ENCODE measurements at regions of chr1 and their contacts with region 1.

Region 1: DNA sequence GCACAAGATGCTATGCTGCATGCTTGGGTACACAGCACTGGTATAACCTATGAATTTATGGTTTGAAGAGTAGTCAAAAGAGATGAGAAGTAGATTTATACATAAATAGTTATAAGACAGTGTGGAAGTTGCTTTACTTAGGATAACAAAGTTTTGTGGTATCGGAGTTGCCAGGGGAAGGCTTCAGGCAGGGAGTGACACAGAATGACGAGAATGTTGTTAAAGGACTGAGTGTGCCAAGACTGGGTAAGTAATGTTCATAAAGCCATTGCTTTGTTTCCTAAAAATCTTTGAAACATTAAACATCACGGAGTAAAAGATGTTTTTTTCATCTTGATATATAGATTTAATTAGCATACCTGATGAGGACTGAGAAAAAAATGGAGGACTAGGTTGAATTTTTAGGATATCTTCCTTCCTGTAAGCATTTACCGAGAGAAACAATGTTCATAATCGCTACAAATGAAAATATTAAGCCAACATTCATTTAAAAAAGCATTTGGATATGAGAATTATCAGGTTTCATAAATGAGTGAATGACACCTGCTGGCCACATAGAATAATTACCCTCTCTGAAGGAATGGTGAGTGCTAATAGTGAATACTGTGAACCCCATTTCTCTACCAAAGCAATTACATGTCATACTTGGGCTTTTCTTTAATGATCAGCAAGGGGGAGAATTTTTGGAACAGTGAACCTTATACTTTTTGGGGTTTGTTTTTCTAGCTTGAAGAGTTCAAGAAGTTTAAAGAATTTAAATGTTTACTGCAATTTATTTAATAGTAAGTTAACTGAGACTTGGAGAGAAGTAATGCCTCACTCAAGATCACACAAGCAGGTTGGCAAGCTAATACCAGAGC is 28.4 kb downstream of the EXTL2 start:
- DNase-seq: peak; percentile 47 to 70 (median 67)
- H3K4me3 ChIP-seq: peak overlapping the region in 1 of 7 experiments; percentile 17
- H3K27ac ChIP-seq: no peak overlapping the region
- H3K4me1 ChIP-seq: peaks cover 0 to 9% (median 3%) of the 10 kb centered on the region in 4 experiments
- H3K27me3 ChIP-seq: no peaks in the 10 kb centered on the region

Region 2: GRCh38 chr1:100469578-100469977 is 396.7 kb before region 1 on chr1:
- CTCF ChIA-PET with region 1: interaction called, 52 read pairs
- POLR2A ChIA-PET with region 1: no interaction called
- DNase-seq: no peak
- H3K4me3 ChIP-seq: no peak overlapping the region
- H3K27ac ChIP-seq: no peak overlapping the region
- H3K4me1 ChIP-seq: peaks cover 0 to 8% (median under 1%) of the 10 kb centered on the region in 4 experiments
- H3K27me3 ChIP-seq: no peaks in the 10 kb centered on the region

Region 3: GRCh38 chr1:100532645-100533044 is 333.6 kb before region 1 on chr1:
- CTCF ChIA-PET with region 1: interaction called, 10 read pairs
- POLR2A ChIA-PET with region 1: no interaction called
- DNase-seq: peak in 1 of 3 donors; percentile 30
- H3K4me3 ChIP-seq: peak overlapping the region in 1 of 7 experiments; percentile 29
- H3K27ac ChIP-seq: no peak overlapping the region
- H3K4me1 ChIP-seq: peaks cover 13 to 53% (median 29%) of the 10 kb centered on the region in 4 experiments
- H3K27me3 ChIP-seq: peaks cover 0 to 1% (median 0%) of the 10 kb centered on the region in 5 experiments

Region 4: DNA sequence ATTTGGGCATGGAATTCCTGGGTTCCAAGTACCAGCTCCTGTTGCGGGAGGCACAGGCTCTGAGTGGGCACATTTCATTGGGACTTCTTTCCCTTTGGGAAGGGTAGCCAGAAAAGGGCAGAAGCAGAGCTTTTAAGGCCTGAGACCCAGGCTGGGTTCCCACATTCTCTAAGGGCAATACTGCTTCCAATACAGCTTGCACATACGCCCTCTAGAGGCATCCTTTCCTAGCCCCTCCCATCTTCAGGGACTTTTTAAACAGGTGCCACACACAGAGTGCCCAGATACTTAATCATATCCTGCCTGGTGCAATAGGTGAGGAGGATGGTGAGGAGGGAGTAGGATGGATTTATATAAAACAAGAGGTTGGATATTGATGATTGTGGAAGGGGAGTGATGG is 322.6 kb before region 1 on chr1:
- CTCF ChIA-PET with region 1: interaction called, 13 read pairs
- POLR2A ChIA-PET with region 1: no interaction called
- DNase-seq: peak; percentile 44 to 71 (median 67)
- H3K4me3 ChIP-seq: no peak overlapping the region
- H3K27ac ChIP-seq: no peak overlapping the region
- H3K4me1 ChIP-seq: peaks cover 0 to 15% (median 15%) of the 10 kb centered on the region in 4 experiments
- H3K27me3 ChIP-seq: peaks cover 7 to 27% (median 9%) of the 10 kb centered on the region in 5 experiments

Region 5: DNA sequence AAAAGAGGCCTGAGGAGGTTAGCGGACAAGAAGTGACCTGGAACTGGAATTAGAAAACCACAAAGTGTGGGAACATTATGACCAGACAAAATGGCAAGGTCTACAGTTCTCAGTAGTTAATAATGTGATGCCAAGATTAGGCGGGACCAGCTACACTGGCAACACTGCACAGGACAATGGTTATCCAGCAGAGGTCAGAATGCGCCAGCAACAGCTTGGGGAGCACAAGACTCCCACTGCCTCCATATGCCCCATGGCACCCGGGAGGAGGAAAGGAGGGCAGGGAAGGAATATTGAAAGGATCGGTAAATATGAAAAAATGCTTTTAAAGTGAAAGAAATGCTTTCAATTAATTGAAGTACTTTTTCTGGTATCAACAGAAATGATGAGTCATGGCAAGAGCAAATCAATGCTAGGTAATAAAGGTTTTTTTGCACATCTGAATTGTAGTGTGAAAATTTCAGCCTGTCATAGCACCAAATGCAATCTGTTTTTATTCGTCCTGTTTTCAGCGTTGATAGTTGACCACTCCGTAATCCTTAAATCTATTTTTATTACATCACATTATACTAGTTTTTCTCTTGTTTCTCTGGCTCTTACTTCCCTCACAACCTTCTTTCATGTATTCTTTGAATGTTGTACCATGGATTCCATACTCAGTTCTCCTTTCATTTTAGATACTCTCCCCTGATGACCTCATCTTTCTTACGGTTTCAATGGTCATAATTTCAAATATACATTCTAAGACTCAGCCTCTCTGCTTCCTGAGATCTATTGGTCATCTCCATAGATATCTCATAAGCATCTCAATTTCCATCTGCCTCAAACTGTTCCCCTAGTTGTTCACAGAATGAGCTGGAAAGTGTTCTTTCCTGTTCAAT is 116.0 kb before region 1 on chr1:
- CTCF ChIA-PET with region 1: no interaction called
- POLR2A ChIA-PET with region 1: no interaction called
- DNase-seq: no peak
- H3K4me3 ChIP-seq: no peak overlapping the region
- H3K27ac ChIP-seq: no peak overlapping the region
- H3K4me1 ChIP-seq: no peaks in the 10 kb centered on the region
- H3K27me3 ChIP-seq: no peaks in the 10 kb centered on the region

Measured in common myeloid progenitor, CD34-positive (primary cell).